Ascending aorta (tissue), 2 donors: ENCODE measurements at regions of chr2 and their contacts with region 1.

Region 1: GRCh38 chr2:121408641-121409040 is 122.0 kb upstream of the RNU4ATAC start:
- DNase-seq: no peak
- H3K4me3 ChIP-seq: no peak overlapping the region
- H3K27ac ChIP-seq: no peak overlapping the region
- H3K4me1 ChIP-seq: no peaks in the 10 kb centered on the region
- H3K27me3 ChIP-seq: no peaks in the 10 kb centered on the region
- CTCF ChIP-seq: no peak

Region 2: GRCh38 chr2:121355488-121355887 is 53.2 kb before region 1 on chr2:
- intact Hi-C with region 1: no loop called
- DNase-seq: no peak
- H3K4me3 ChIP-seq: no peak overlapping the region
- H3K27ac ChIP-seq: peak overlapping the region; percentile 28 to 32
- H3K4me1 ChIP-seq: peaks cover 0 to 22% of the 10 kb centered on the region in 2 donors
- H3K27me3 ChIP-seq: no peaks in the 10 kb centered on the region
- CTCF ChIP-seq: no peak

Region 3: GRCh38 chr2:121699421-121700333 is 291.0 kb after region 1 on chr2:
- intact Hi-C with region 1: loop called (anchors 5 kb)
- DNase-seq: peak; percentile 48 to 81
- H3K4me3 ChIP-seq: peak overlapping the region in 1 of 2 donors; percentile 14
- H3K27ac ChIP-seq: peak overlapping the region in 1 of 2 donors; percentile 45
- H3K4me1 ChIP-seq: peaks cover 0 to 16% of the 10 kb centered on the region in 2 donors
- H3K27me3 ChIP-seq: no peaks in the 10 kb centered on the region
- CTCF ChIP-seq: no peak